Activated CD4-positive, alpha-beta T cell treated with anti-CD3 and anti-CD28 coated beads for 36 hours (primary cell): ENCODE measurements at regions of chr4 and their contacts with region 1.

Region 1: GRCh38 chr4:41692717-41693345 is 55.7 kb downstream of the PHOX2B start:
- DNase-seq: peak; percentile 67
- ATAC-seq: peak; percentile 58
- H3K4me3 Mint-ChIP-seq: no peak overlapping the region
- H3K27ac Mint-ChIP-seq: no peak overlapping the region
- H3K4me1 Mint-ChIP-seq: no peaks in the 10 kb centered on the region
- H3K27me3 Mint-ChIP-seq: peaks cover 10% of the 10 kb centered on the region

Region 2: GRCh38 chr4:40114206-40114605 is 1578.6 kb before region 1 on chr4:
- CTCF ChIA-PET with region 1: no interaction called
- POLR2A ChIA-PET with region 1: no interaction called
- intact Hi-C with region 1: no loop called
- DNase-seq: no peak
- ATAC-seq: no peak
- H3K4me3 Mint-ChIP-seq: no peak overlapping the region
- H3K27ac Mint-ChIP-seq: no peak overlapping the region
- H3K4me1 Mint-ChIP-seq: peaks cover 6% of the 10 kb centered on the region
- H3K27me3 Mint-ChIP-seq: no peaks in the 10 kb centered on the region

Region 3: DNA sequence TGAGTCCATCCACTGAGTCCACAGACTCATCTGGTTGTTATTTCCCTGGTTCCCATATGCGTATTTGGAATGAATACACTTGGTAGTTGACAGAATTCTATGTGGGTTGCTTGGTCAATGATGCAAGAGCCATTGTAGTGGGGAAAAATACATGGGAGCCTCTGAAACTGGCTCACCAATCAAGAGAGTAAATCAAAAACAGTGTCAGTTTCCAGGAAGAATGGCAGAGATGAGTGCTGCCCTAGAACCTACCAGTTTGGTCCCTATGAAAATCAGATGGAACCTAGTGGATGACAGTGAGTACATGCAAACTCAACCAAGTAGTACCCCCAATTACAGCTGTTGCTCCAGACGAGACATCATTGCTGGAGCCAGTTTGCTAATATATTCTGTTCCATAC is 139.2 kb after region 1 on chr4:
- CTCF ChIA-PET with region 1: no interaction called
- POLR2A ChIA-PET with region 1: no interaction called
- intact Hi-C with region 1: no loop called
- DNase-seq: no peak
- ATAC-seq: no peak
- H3K4me3 Mint-ChIP-seq: no peak overlapping the region
- H3K27ac Mint-ChIP-seq: no peak overlapping the region
- H3K4me1 Mint-ChIP-seq: no peaks in the 10 kb centered on the region
- H3K27me3 Mint-ChIP-seq: peaks cover 26% of the 10 kb centered on the region

Region 4: GRCh38 chr4:41887821-41888686 is 195.2 kb after region 1 on chr4:
- CTCF ChIA-PET with region 1: interaction called, 21 read pairs
- POLR2A ChIA-PET with region 1: no interaction called
- intact Hi-C with region 1: loop called in 1 of 2 experiments (anchors 1 kb)
- DNase-seq: peak; percentile 64
- ATAC-seq: no peak
- H3K4me3 Mint-ChIP-seq: no peak overlapping the region
- H3K27ac Mint-ChIP-seq: no peak overlapping the region
- H3K4me1 Mint-ChIP-seq: no peaks in the 10 kb centered on the region
- H3K27me3 Mint-ChIP-seq: peaks cover 16% of the 10 kb centered on the region

Region 5: DNA sequence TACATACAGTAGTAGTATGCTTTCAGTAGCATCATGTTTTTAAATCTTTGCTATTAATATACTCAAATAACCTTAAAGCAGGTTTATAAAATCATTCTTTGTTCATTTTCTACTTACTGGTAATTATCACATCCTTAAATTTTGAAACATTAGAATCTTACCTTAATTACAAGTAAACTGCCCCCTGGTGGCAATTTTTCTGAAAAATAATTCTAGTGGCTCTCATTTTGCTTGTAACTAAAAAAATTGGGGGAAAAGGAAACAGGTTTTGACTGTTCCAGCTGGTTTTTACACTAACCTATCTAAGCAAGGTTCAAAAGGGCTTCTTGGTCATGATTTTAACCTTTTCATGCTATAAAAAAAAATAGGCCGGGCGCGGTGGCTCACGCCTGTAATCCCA is 270.3 kb after region 1 on chr4:
- CTCF ChIA-PET with region 1: no interaction called
- POLR2A ChIA-PET with region 1: no interaction called
- intact Hi-C with region 1: loop called in 1 of 2 experiments (anchors 5 kb)
- DNase-seq: no peak
- ATAC-seq: no peak
- H3K4me3 Mint-ChIP-seq: no peak overlapping the region
- H3K27ac Mint-ChIP-seq: no peak overlapping the region
- H3K4me1 Mint-ChIP-seq: no peaks in the 10 kb centered on the region
- H3K27me3 Mint-ChIP-seq: no peaks in the 10 kb centered on the region